Aorta (tissue), 5 donors: ENCODE measurements at regions of chr5 and their contacts with region 1.

Region 1: GRCh38 chr5:81751009-81751835 is at the start of gene SSBP2:
- DNase-seq: peak; percentile 99 to 100
- ATAC-seq: peak; percentile 97
- H3K4me3 ChIP-seq: peak within 1 kb of the TSS; percentile 94 to 95
- H3K27ac ChIP-seq: peak within 1 kb of the TSS; percentile 58 to 91
- H3K4me1 ChIP-seq: no peaks in the 10 kb centered on the region
- H3K27me3 ChIP-seq: no peaks in the 10 kb centered on the region
- total RNA-seq, gene SSBP2: 73.7 to 92.0 TPM

Region 2: DNA sequence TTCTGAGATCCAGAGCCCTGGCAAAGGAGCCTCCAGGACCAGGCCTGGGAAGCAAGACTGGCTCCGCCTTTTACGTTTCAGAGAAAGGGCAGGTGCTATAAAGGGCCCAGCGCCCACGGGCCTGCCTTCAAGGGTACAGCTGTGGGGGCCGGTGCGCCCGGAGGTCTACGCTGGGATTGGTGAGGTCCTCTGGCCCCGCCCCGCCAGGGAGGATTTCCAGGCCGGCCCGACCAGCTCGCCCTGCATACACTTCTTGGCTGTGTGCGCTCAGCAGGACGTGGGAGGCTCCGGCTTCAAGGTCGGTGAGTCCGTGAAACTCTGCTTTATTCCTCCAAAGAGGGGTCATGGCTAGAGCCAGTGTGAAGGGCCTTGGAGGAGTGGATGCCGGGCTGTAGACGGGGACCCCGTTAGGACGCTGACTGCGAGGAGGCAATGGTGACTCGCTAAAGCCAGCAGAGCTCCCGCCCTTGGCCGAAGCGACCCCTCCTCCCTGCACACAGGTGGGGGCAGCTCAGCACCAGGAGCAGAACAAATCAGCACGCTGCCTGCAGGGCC is 518.1 kb before region 1 on chr5 and contains the start of gene CKMT2:
- intact Hi-C with region 1: loop called in 1 of 2 experiments (anchors 10 kb)
- DNase-seq: peak; percentile 90 to 94
- ATAC-seq: peak; percentile 90
- H3K4me3 ChIP-seq: peak within 1 kb of the TSS; percentile 5 to 29
- H3K27ac ChIP-seq: peak within 1 kb of the TSS; percentile 73 to 92
- H3K4me1 ChIP-seq: no peaks in the 10 kb centered on the region
- H3K27me3 ChIP-seq: no peaks in the 10 kb centered on the region
- total RNA-seq, gene CKMT2: 24.1 to 29.3 TPM

Region 3: DNA sequence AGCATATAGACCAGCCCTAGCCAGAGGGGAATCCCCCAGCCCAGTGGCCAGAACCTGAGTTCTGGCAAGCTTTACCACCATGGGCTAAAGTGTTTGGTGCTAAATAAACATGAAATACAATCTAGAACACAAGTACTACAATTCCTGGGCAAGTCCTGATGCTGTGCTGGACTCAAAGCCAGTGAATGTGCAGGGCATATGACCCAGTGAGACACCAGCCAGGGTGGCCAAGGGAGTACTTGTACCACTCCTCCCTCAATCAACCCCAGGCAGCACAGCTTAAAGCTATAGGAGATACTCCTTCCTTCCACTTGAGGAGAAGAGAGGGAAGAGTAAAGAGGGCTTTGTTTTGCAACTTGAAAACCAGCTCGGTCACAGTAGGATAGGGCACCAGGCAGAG is 63.9 kb before region 1 on chr5:
- intact Hi-C with region 1: no loop called
- DNase-seq: no peak
- ATAC-seq: no peak
- H3K4me3 ChIP-seq: no peak overlapping the region
- H3K27ac ChIP-seq: no peak overlapping the region
- H3K4me1 ChIP-seq: no peaks in the 10 kb centered on the region
- H3K27me3 ChIP-seq: no peaks in the 10 kb centered on the region

Region 4: GRCh38 chr5:81773574-81773973 is 22.4 kb after region 1 on chr5:
- intact Hi-C with region 1: loop called in 1 of 2 experiments (anchors 1 kb)
- DNase-seq: no peak
- ATAC-seq: peak; percentile 64
- H3K4me3 ChIP-seq: no peak overlapping the region
- H3K27ac ChIP-seq: peak overlapping the region; percentile 71 to 94
- H3K4me1 ChIP-seq: peaks cover 4 to 16% of the 10 kb centered on the region in 2 donors
- H3K27me3 ChIP-seq: no peaks in the 10 kb centered on the region

Region 5: DNA sequence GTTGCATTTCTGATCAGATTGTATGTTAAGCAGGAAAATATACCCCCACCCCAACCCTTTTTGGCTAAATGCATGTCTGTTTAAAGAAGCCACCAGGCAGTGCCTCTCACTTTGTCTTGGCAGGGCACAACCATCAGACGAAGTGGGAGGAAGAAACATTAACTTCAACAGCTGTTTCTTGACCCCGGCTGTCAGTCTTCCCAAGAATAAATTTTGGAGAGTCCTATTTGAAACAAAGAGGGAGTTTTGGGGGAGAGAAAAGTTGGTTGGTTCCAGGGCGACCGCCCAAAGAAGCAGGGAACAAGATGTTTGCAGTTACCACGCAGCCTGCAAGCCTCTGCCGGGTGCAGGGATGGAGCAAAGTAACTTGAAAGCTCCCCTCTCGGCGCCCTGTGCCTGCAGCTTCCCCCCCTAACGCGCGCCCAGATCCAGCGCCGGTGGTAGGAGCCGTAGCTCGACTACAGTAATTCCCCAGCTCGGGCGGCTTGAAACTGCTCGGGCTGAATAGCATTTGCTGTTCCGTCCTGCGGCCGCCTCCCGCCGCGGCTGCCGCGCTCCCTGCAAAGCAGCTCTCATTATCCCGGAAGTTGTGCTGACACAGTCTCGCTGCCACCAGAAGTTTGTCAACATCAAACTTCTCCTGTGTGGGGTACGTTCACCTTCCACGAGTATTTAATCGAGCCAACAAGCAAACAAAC is 100.4 kb after region 1 on chr5:
- intact Hi-C with region 1: loop called (anchors 1 kb)
- DNase-seq: peak; percentile 98
- ATAC-seq: peak; percentile 98
- H3K4me3 ChIP-seq: peak overlapping the region; percentile 47 to 81
- H3K27ac ChIP-seq: peak overlapping the region; percentile 73 to 94
- H3K4me1 ChIP-seq: peaks cover 5 to 12% of the 10 kb centered on the region in 2 donors
- H3K27me3 ChIP-seq: no peaks in the 10 kb centered on the region

Region 6: DNA sequence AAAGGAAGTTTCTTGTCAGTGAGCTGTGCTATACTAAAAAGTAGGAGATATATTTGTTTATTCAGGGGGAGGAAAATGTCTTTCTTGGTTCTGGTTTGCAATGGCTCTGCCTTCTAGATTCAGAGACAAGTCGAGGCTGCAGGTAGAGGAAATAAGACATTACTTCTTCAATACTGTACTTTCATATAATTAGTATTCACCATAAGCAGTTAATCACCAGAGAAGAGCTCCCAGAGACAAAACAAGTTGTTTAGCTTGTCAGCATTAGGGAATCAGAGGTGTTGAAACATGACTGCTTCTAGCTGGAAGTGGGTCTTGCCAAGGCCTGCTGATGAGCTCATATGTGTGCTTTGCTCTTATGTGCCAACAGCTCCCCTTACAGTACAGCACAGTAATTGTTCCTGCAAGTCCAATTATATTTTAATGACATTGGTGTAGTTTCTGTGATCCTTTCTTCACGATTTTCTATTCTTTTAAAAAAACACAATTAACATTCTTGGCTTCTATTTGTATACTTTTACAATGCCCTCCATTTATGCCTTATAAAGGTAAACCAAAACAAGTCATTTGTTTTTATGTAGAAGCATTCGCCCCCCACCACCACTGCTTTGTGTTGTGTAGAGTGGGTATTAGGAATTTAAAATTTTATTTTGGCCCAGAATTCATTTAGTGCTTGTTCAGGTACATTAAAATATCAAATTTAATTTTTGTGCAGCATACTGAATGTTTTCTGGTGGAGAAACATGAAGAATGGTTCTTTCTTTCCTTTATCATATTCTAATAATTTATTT is 414.7 kb after region 1 on chr5:
- intact Hi-C with region 1: loop called (anchors 10 kb)
- DNase-seq: peak; percentile 74 to 77
- ATAC-seq: peak; percentile 97
- H3K4me3 ChIP-seq: no peak overlapping the region
- H3K27ac ChIP-seq: no peak overlapping the region
- H3K4me1 ChIP-seq: no peaks in the 10 kb centered on the region
- H3K27me3 ChIP-seq: no peaks in the 10 kb centered on the region